Activated CD4-positive, alpha-beta memory T cell treated with anti-CD3 and anti-CD28 coated beads, Interleukin-2, amount 10 ng/mL, durations not matched to agents 7 days and 5 days (primary cell): ENCODE measurements at regions of chr14 and their contacts with region 1.

Region 1: GRCh38 chr14:55026793-55027561 is at the starts of genes SOCS4 and WDHD1:
- DNase-seq: peak; percentile 97
- H3K4me3 Mint-ChIP-seq: peak within 1 kb of the TSS; percentile 88
- H3K27ac Mint-ChIP-seq: peak within 1 kb of the TSS; percentile 88
- H3K4me1 Mint-ChIP-seq: peaks cover 52% of the 10 kb centered on the region
- H3K27me3 Mint-ChIP-seq: no peaks in the 10 kb centered on the region
- total RNA-seq, gene SOCS4: 24.2 to 32.0 TPM
- total RNA-seq, gene WDHD1: 36.2 to 36.9 TPM

Region 2: DNA sequence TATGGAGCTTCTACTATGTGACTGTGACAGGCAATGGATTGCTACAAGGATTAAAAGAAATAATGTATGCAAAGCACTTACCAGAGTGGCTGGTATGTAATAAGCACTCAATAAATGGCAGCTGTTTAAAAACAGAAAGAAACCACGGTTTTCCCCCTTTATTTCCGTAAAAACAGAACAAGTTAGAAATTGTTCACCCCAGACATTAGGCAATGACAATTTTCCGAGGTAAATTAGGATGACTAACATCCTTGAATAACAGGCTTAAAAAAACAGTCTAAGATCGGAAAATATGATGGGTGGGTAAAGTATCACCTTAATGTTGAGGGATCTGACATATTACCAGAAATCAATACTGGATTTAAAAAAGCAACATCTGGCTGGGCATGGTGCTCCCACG is 564.9 kb before region 1 on chr14:
- CTCF ChIA-PET with region 1: no interaction called
- POLR2A ChIA-PET with region 1: no interaction called
- DNase-seq: no peak
- H3K4me3 Mint-ChIP-seq: no peak overlapping the region
- H3K27ac Mint-ChIP-seq: no peak overlapping the region
- H3K4me1 Mint-ChIP-seq: no peaks in the 10 kb centered on the region
- H3K27me3 Mint-ChIP-seq: no peaks in the 10 kb centered on the region

Region 3: GRCh38 chr14:54709444-54709843 is 317.5 kb before region 1 on chr14:
- CTCF ChIA-PET with region 1: no interaction called
- POLR2A ChIA-PET with region 1: no interaction called
- DNase-seq: no peak
- H3K4me3 Mint-ChIP-seq: no peak overlapping the region
- H3K27ac Mint-ChIP-seq: no peak overlapping the region
- H3K4me1 Mint-ChIP-seq: peaks cover 8% of the 10 kb centered on the region
- H3K27me3 Mint-ChIP-seq: peaks cover 2% of the 10 kb centered on the region

Region 4: GRCh38 chr14:54881235-54881760 is 145.7 kb before region 1 on chr14:
- CTCF ChIA-PET with region 1: interaction called, 3 read pairs
- POLR2A ChIA-PET with region 1: interaction called, 13 read pairs
- DNase-seq: peak; percentile 40
- H3K4me3 Mint-ChIP-seq: peak overlapping the region; percentile 76
- H3K27ac Mint-ChIP-seq: peak overlapping the region; percentile 96
- H3K4me1 Mint-ChIP-seq: peaks cover 44% of the 10 kb centered on the region
- H3K27me3 Mint-ChIP-seq: no peaks in the 10 kb centered on the region

Region 5: GRCh38 chr14:54902521-54903420 is 124.2 kb before region 1 on chr14 and contains the start of gene GCH1:
- CTCF ChIA-PET with region 1: interaction called, 12 read pairs
- POLR2A ChIA-PET with region 1: interaction called, 31 read pairs
- DNase-seq: peak; percentile 81
- H3K4me3 Mint-ChIP-seq: peak within 1 kb of the TSS; percentile 85
- H3K27ac Mint-ChIP-seq: peak within 1 kb of the TSS; percentile 92
- H3K4me1 Mint-ChIP-seq: peaks cover 49% of the 10 kb centered on the region
- H3K27me3 Mint-ChIP-seq: no peaks in the 10 kb centered on the region
- total RNA-seq, gene GCH1: 68.7 to 70.3 TPM

Region 6: DNA sequence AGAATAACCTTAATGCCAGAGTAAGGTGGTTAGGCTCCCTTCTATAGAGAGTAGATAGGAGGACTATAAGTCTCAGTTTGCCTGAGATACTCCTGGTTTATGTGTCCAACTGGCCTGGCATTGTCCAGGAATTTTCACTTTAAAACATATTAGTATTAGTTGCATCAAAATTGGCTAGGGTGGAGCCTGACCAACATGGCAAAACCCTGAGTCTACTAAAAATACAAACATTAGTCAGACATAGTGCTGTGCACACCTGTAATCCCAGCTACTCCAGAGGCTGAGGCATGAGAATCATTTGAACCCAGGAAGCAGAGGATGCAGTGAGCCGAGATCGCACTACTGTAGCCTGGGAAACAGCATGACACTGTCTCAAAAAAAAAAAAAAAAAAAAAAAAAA is 12.0 kb before region 1 on chr14:
- CTCF ChIA-PET with region 1: interaction called, 7 read pairs
- POLR2A ChIA-PET with region 1: interaction called, 19 read pairs
- DNase-seq: no peak
- H3K4me3 Mint-ChIP-seq: no peak overlapping the region
- H3K27ac Mint-ChIP-seq: no peak overlapping the region
- H3K4me1 Mint-ChIP-seq: peaks cover 4% of the 10 kb centered on the region
- H3K27me3 Mint-ChIP-seq: no peaks in the 10 kb centered on the region

Region 7: GRCh38 chr14:55045087-55045486 is 18.1 kb after region 1 on chr14:
- CTCF ChIA-PET with region 1: interaction called, 41 read pairs
- POLR2A ChIA-PET with region 1: interaction called, 39 read pairs
- DNase-seq: no peak
- H3K4me3 Mint-ChIP-seq: no peak overlapping the region
- H3K27ac Mint-ChIP-seq: no peak overlapping the region
- H3K4me1 Mint-ChIP-seq: no peaks in the 10 kb centered on the region
- H3K27me3 Mint-ChIP-seq: no peaks in the 10 kb centered on the region

Region 8: GRCh38 chr14:55102141-55102621 is 75.2 kb after region 1 on chr14:
- CTCF ChIA-PET with region 1: no interaction called
- POLR2A ChIA-PET with region 1: interaction called, 15 read pairs
- DNase-seq: peak; percentile 72
- H3K4me3 Mint-ChIP-seq: peak overlapping the region; percentile 61
- H3K27ac Mint-ChIP-seq: peak overlapping the region; percentile 99
- H3K4me1 Mint-ChIP-seq: peaks cover 71% of the 10 kb centered on the region
- H3K27me3 Mint-ChIP-seq: no peaks in the 10 kb centered on the region

Region 9: GRCh38 chr14:55191203-55192053 is 164.5 kb after region 1 on chr14 and contains the start of gene DLGAP5:
- CTCF ChIA-PET with region 1: no interaction called
- POLR2A ChIA-PET with region 1: interaction called, 34 read pairs
- DNase-seq: peak; percentile 95
- H3K4me3 Mint-ChIP-seq: peak within 1 kb of the TSS; percentile 77
- H3K27ac Mint-ChIP-seq: peak within 1 kb of the TSS; percentile 83
- H3K4me1 Mint-ChIP-seq: peaks cover 39% of the 10 kb centered on the region
- H3K27me3 Mint-ChIP-seq: peaks cover 4% of the 10 kb centered on the region
- total RNA-seq, gene DLGAP5: 89.7 to 95.8 TPM